ENCODE measurements at regions of chr7 and their contacts with region 1.

Region 1: DNA sequence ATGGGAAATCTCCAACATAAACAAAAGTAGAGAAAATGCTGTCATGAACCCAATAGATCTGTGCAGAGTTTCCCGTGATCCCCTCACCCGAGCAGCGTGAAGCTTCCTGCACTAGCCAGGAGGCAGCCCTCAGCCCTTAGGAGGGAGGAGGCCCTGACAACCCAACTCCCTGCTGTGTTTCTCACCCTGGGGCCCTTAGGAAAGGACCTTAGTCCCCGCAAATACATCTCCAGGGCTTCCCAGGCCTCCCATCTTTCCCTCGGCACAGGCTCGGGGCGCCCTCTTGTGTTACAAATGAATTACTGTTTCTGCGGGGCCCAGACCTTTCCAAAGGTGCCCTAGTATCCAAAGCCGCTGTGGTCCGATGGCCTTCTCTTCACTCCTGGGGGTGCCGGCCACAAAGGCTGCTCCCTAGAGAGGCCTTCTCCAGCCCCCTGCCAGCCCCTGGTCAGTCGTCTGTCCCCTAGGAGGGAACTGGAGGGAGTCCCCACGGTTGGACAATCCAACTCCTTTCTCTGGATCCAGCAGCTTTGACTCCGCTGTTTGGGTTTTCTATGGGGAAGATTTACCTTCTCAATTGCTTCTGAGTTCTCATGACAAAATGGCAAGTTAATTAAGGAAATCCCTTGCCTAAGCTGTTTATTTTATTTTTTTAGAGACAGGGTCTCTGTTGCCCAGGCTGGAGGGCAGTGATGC is 49.9 kb upstream of the SH2B2 start:
- DNase-seq: peak in 1 of 2 experiments; percentile 71
- H3K4me3 ChIP-seq: no peak overlapping the region
- H3K27ac ChIP-seq: no peak overlapping the region
- H3K4me1 ChIP-seq: no peaks in the 10 kb centered on the region
- H3K27me3 ChIP-seq: no peaks in the 10 kb centered on the region
- CTCF ChIP-seq: peak; percentile 90

Region 2: DNA sequence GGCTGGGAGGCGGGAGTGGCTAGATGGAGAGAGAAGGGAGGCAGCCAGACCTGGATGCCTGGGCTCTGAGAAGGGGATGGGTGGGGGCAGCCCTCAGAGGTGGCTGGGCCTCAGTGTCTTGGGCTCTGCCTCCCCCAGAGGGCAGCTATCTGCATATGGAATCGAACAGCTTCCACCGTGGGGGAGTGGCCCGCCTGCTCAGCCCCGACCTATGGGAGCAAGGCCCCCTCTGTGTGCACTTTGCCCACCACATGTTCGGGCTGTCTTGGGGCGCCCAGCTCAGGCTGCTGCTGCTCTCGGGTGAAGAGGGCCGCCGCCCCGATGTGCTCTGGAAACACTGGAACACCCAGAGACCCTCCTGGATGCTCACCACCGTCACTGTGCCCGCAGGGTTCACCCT is 1500.1 kb before region 1 on chr7:
- CTCF ChIA-PET with region 1: no interaction called
- POLR2A ChIA-PET with region 1: no interaction called
- intact Hi-C with region 1: no loop called
- DNase-seq: no peak
- H3K4me3 ChIP-seq: no peak overlapping the region
- H3K27ac ChIP-seq: no peak overlapping the region
- H3K4me1 ChIP-seq: no peaks in the 10 kb centered on the region
- H3K27me3 ChIP-seq: peaks cover 17% of the 10 kb centered on the region
- CTCF ChIP-seq: no peak

Region 3: GRCh38 chr7:101542527-101543241 is 694.1 kb before region 1 on chr7:
- CTCF ChIA-PET with region 1: interaction called, 3 read pairs
- POLR2A ChIA-PET with region 1: no interaction called
- intact Hi-C with region 1: loop called (anchors 1 kb)
- DNase-seq: peak in 1 of 2 experiments; percentile 77
- H3K4me3 ChIP-seq: no peak overlapping the region
- H3K27ac ChIP-seq: no peak overlapping the region
- H3K4me1 ChIP-seq: no peaks in the 10 kb centered on the region
- H3K27me3 ChIP-seq: no peaks in the 10 kb centered on the region
- CTCF ChIP-seq: peak; percentile 98

Region 4: DNA sequence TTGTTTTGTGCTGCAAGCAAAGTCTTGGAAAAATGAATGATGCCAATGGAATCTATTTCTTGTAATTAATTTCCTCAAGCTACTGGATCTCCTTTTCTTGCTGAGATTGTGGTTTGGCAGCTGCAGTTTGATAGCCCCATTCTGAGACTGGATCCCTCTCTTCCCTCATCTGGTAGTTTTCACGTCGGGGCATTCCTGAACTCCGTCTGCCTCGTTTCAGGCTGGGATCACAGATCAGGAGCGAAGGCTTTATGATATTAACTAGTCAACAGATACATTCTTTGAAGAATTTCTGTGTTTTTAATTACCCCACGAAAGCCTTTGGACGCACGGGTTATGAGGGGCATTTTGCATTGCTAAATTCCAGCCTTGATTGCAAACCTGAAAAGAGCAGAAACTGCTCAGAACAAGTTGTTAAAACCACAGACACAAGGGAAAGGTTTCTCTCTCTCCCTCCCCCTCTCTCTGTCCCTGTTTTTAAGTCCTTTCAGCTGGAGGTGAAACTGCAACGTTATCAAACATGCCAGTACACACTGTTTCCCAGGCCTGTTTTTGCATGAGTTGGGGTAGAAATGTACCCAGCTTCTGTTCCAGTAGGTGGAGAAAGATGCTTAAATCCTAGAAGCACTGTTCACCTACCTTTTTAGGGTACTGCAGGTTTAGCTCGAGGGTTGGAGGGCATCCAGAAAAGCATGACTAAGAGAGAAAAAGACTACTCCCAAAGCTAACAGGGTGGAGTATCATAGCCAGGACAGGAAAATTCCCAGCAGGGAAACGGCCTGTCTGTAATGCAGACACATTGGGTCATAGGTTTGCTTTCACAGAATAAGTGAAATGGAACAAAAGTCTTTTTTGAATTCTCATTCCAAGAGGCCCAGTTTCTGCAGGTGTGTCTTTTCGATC is 295.0 kb before region 1 on chr7:
- CTCF ChIA-PET with region 1: no interaction called
- POLR2A ChIA-PET with region 1: no interaction called
- intact Hi-C with region 1: loop called (anchors 2 kb)
- DNase-seq: peak; percentile 76 to 89
- H3K4me3 ChIP-seq: no peak overlapping the region; the same call in 1 of the 2 replicates
- H3K27ac ChIP-seq: peak overlapping the region; percentile 84
- H3K4me1 ChIP-seq: peaks cover 34% of the 10 kb centered on the region
- H3K27me3 ChIP-seq: no peaks in the 10 kb centered on the region
- CTCF ChIP-seq: no peak

Region 5: GRCh38 chr7:102008535-102009345 is 228.0 kb before region 1 on chr7:
- CTCF ChIA-PET with region 1: no interaction called
- POLR2A ChIA-PET with region 1: no interaction called
- intact Hi-C with region 1: loop called (anchors 10 kb)
- DNase-seq: peak in 1 of 2 experiments; percentile 79
- H3K4me3 ChIP-seq: no peak overlapping the region
- H3K27ac ChIP-seq: no peak overlapping the region
- H3K4me1 ChIP-seq: no peaks in the 10 kb centered on the region
- H3K27me3 ChIP-seq: no peaks in the 10 kb centered on the region
- CTCF ChIP-seq: no peak

Measured in PC-9 (cell line).